ENCODE measurements at regions of chr4 and their contacts with region 1.

Region 1: DNA sequence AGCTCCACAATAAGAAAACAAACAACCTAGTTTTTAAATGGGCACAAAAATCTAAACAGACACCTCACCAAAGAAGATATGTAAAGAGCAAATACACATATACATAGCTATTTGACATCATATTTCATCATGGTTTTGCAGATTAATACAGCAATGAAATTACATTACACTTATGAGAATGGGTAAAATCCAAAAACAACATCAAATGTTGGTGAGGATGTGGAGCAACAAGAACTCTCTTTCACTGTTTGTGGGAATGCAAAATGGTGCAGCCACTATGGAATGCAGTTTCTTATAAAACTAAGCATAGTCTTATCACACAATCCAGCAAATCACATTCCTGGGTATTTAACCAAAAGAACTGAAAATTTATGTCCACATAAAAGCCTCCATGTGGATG is 25.0 kb downstream of the TLR6 start:
- DNase-seq: peak; percentile 72
- ATAC-seq: peak; percentile 85
- H3K4me3 ChIP-seq: no peak overlapping the region
- H3K27ac ChIP-seq: no peak overlapping the region
- H3K4me1 ChIP-seq: peaks cover 14% of the 10 kb centered on the region; the same call in 1 of the 2 replicates
- H3K27me3 ChIP-seq: no peaks in the 10 kb centered on the region
- CTCF ChIP-seq: no peak
- POLR2A ChIP-seq: no peak
- RAD21 ChIP-seq: no peak

Region 2: DNA sequence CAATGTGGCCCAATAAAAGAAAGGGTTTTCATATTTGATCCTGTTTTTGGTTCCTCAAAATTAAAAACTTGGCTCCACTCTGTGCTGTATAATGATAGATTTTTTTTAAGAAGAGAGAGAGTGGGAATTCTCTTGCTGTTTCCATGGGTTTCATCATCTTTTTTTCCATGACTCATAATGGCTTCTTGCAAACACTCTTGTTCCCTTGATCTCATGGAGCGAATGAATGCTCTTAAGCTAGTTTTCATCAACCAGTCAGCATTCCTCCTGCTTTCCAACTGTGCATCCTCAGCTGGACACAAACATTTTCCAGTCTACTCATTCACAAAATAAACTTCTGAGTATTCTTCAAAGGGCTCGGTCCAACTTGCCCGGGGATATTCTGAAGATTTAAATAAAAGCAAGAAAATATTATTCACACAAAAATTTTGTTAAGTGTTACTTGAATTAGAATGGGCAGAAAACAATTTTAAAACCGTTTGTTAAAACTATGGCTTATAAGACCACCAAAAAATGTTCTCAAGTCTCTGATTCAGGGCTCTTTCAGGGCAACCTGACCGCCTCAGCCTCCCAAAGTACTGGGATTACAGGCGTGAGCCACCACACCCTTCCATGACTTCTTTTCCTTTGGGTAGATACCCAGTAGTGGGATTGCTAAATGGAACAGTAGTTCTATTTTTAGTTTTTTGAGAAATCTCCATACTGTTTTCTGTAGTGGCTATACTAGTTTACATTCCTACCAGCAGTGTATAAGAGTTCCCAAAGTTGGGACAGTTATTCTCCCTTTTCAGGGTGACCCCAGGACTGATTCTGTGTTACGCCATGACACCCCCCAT is 135.8 kb after region 1 on chr4:
- CTCF ChIA-PET with region 1: no interaction called
- POLR2A ChIA-PET with region 1: interaction called, 14 read pairs
- dilution Hi-C with region 1: no loop called
- in situ Hi-C with region 1: no loop called
- intact Hi-C with region 1: no loop called
- DNase-seq: peak; percentile 100
- ATAC-seq: peak; percentile 95
- H3K4me3 ChIP-seq: no peak overlapping the region
- H3K27ac ChIP-seq: peak overlapping the region; percentile 99
- H3K4me1 ChIP-seq: peaks cover 6% of the 10 kb centered on the region
- H3K27me3 ChIP-seq: no peaks in the 10 kb centered on the region
- CTCF ChIP-seq: no peak
- POLR2A ChIP-seq: no peak
- RAD21 ChIP-seq: no peak